Naive thymus-derived CD8-positive, alpha-beta T cell (primary cell): ENCODE measurements at regions of chr14 and their contacts with region 1.

Region 1: DNA sequence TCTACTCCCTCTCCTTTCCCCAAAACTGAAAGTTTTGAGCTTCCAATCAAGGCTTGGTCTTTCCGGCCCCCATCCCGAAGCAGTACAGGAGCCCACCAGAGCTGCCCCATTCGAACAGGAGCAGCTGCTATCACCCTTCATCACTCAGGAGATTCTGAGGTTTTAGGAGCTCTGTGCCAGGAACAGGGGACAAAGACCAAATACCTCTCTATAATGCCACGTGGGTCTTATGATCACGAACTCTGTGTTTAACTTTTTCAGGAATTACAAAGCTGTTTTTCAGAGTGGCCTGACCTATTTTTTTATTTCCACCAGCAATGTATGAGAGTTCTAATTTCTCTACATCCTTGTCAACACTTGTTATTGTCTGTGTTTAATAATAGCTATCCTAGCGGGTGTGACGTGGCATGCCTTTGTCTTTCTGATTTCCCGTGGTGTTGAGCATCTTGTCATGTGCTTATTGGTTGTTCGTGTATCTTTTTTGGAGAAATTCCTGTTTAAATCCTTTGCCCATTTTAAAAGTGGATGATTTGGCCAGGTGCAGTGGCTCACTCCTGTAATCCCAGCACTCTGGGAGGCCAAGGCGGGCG is 21.7 kb downstream of the COA8 start:
- DNase-seq: no peak
- ATAC-seq: no peak
- H3K4me3 Mint-ChIP-seq: no peak overlapping the region
- H3K27ac Mint-ChIP-seq: peak overlapping the region in 2 of 10 donors; percentile 4 to 48
- H3K4me1 Mint-ChIP-seq: peaks cover 0 to 2% (median under 1%) of the 10 kb centered on the region in 4 donors
- H3K27me3 Mint-ChIP-seq: no peaks in the 10 kb centered on the region

Region 2: DNA sequence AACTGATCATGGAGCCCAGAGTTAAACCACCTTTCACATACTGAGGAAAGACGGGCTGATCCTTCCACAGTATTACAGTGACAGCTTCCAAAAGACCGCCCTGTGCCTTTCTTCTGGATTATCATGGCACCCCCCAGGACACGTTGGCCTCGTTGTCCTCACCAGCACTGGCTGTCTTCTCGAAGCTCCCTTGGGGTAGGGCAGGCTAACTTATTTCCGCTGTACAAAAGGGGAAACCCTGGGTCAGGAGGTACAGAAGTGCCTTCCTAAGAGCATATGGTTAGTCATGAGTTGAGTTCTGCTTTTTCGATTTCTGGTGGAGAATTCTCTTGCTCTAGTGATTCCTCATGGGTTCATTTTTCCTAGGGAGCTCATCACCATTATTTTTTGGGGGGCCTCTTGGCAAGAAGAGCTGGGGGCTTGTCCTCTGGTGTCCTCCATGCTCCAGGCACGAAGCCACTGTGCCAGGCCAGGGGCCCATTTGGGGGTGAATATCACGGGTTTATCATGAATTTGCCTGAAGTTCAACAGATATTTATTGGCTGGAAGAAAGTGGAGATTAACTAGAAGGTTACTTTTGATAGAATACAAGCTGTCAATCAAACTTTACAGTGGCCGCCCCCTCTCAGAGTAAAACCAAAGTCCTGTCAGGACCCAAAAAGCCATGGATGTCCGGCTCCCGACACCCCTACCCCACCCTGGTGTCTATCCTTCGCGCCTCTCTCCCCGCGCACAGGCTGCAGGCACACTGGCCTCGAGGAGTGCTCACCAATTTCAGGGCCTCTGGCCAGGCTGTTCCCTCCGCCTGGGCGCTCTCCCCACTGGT is 816.0 kb before region 1 on chr14:
- POLR2A ChIA-PET with region 1: interaction called, 10 read pairs
- DNase-seq: peak in 1 of 10 donors; percentile 38
- ATAC-seq: peak in 1 of 2 donors; percentile 72
- H3K4me3 Mint-ChIP-seq: peak overlapping the region in 1 of 10 donors; percentile 47
- H3K27ac Mint-ChIP-seq: peak overlapping the region in 3 of 10 donors; percentile 16 to 90 (median 56)
- H3K4me1 Mint-ChIP-seq: peaks cover 0 to 28% (median 5%) of the 10 kb centered on the region in 4 donors
- H3K27me3 Mint-ChIP-seq: peaks cover 0 to 3% (median 0%) of the 10 kb centered on the region in 5 donors

Region 3: DNA sequence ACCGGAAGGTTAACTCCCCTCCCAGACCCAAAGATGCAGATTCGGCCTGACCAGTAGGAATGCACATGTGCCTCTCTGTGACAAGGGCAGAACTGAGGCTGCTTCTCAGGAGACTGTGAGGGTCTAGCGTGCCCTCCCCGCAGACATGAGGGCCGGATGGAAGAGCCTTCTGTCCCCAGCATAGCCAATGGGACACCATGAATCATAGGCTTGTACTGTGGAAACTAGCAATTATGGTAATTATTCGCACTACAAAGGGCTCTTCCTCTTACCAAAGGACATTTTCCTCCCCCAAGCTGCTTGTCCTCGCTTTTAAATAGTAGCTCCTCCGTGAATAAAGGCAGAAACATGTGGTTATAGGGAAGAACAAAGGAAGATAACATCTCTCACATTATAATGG is 15.5 kb before region 1 on chr14:
- POLR2A ChIA-PET with region 1: no interaction called
- DNase-seq: no peak
- ATAC-seq: no peak
- H3K4me3 Mint-ChIP-seq: no peak overlapping the region
- H3K27ac Mint-ChIP-seq: peak overlapping the region in 1 of 10 donors; percentile 22
- H3K4me1 Mint-ChIP-seq: peaks cover 5 to 27% (median 17%) of the 10 kb centered on the region in 4 donors
- H3K27me3 Mint-ChIP-seq: no peaks in the 10 kb centered on the region

Region 4: DNA sequence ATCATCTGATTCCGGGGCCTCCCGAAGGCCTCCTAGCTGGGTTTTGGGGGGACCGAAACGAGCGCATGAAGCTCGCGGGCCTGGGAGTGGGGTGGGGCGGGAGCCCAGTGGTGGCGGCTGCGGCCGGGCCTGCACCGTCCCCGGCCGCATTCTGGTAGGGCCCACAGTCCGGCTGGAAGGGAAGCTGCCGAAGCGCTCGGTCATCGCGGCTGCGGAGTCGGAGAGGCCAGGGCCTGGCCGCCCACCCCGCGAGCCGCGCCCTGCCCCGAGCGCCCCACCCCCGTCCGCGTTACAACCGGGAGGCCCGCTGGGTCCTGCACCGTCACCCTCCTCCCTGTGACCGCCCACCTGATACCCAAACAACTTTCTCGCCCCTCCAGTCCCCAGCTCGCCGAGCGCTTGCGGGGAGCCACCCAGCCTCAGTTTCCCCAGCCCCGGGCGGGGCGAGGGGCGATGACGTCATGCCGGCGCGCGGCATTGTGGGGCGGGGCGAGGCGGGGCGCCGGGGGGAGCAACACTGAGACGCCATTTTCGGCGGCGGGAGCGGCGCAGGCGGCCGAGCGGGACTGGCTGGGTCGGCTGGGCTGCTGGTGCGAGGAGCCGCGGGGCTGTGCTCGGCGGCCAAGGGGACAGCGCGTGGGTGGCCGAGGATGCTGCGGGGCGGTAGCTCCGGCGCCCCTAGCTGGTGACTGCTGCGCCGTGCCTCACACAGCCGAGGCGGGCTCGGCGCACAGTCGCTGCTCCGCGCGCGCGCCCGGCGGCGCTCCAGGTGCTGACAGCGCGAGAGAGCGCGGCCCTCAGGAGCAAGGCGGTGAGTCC is 44.5 kb after region 1 on chr14 and contains the start of gene KLC1:
- POLR2A ChIA-PET with region 1: no interaction called
- DNase-seq: peak; percentile 64 to 89 (median 84)
- ATAC-seq: peak; percentile 76 to 77
- H3K4me3 Mint-ChIP-seq: peak within 1 kb of the TSS; percentile 83 to 92 (median 87)
- H3K27ac Mint-ChIP-seq: peak within 1 kb of the TSS; percentile 72 to 94 (median 91)
- H3K4me1 Mint-ChIP-seq: peaks cover 14 to 67% (median 44%) of the 10 kb centered on the region in 4 donors
- H3K27me3 Mint-ChIP-seq: no peaks in the 10 kb centered on the region
- polyA plus RNA-seq, gene KLC1: 50.7 to 73.3 (median 58.2) TPM